Caco-2 (cell line): ENCODE measurements at regions of chr3 and their contacts with region 1.

Region 1: GRCh38 chr3:117355566-117355965 is 646.0 kb downstream of the TUSC7 start:
- DNase-seq: peak in 1 of 2 experiments; percentile 18
- H3K4me3 ChIP-seq: no peak overlapping the region
- H3K4me3 Mint-ChIP-seq: no peak overlapping the region
- H3K27ac Mint-ChIP-seq: no peak overlapping the region
- H3K4me1 ChIP-seq: no peaks in the 10 kb centered on the region
- H3K4me1 Mint-ChIP-seq: no peaks in the 10 kb centered on the region
- H3K27me3 ChIP-seq: no peaks in the 10 kb centered on the region
- H3K27me3 Mint-ChIP-seq: no peaks in the 10 kb centered on the region
- CTCF ChIP-seq: peak; percentile 32 to 35

Region 2: GRCh38 chr3:117059067-117059955 is 296.3 kb before region 1 on chr3:
- CTCF ChIA-PET with region 1: no interaction called
- POLR2A ChIA-PET with region 1: no interaction called
- intact Hi-C with region 1: loop called (anchors 1 kb)
- DNase-seq: peak in 1 of 2 experiments; percentile 3
- H3K4me3 ChIP-seq: no peak overlapping the region
- H3K4me3 Mint-ChIP-seq: no peak overlapping the region
- H3K27ac Mint-ChIP-seq: no peak overlapping the region
- H3K4me1 ChIP-seq: 0 out of 2 replicates have a peak, but pooled peaks cover 3% of the 10 kb centered on the region
- H3K4me1 Mint-ChIP-seq: no peaks in the 10 kb centered on the region
- H3K27me3 ChIP-seq: no peaks in the 10 kb centered on the region
- H3K27me3 Mint-ChIP-seq: peaks cover 3% of the 10 kb centered on the region
- CTCF ChIP-seq: peak; percentile 17 to 36

Region 3: GRCh38 chr3:117103675-117104074 is 251.9 kb before region 1 on chr3:
- CTCF ChIA-PET with region 1: no interaction called
- POLR2A ChIA-PET with region 1: no interaction called
- intact Hi-C with region 1: loop called (anchors 10 kb)
- DNase-seq: peak in 1 of 2 experiments; percentile 2
- H3K4me3 ChIP-seq: no peak overlapping the region
- H3K4me3 Mint-ChIP-seq: no peak overlapping the region
- H3K27ac Mint-ChIP-seq: no peak overlapping the region
- H3K4me1 ChIP-seq: no peaks in the 10 kb centered on the region
- H3K4me1 Mint-ChIP-seq: no peaks in the 10 kb centered on the region
- H3K27me3 ChIP-seq: no peaks in the 10 kb centered on the region
- H3K27me3 Mint-ChIP-seq: no peaks in the 10 kb centered on the region
- CTCF ChIP-seq: peak in 1 of 2 experiments; percentile 6

Region 4: DNA sequence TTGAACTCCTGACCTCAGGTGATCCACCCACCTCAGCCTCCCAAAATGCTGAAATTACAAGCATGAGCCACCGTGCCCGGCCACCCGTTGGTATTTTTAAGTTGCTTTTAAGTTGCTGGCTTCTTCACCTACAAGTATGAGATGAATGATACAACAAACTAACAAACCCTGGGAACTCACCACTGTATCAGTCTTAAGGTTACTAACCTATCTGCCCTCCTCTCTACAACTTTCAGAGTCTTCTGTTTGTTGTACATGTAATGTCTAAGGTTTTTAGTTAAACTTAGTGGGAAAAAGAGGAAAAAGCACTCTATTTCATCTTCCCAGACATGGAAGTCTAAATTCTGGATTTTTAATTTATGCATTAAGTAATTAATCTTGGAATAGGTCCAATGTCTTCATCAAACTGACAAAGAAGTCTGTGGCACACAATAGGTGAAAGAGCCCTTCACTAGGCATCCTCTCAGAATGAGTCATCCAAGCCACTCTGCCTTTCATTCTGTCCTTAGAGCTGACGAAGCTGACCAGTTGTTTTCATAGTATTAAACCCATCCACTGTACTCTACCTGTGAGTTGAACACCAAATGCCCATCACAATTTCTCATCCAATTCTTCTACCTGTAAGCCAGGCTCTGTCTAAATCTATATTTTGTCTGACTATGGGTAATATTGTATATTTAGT is 290.1 kb after region 1 on chr3:
- CTCF ChIA-PET with region 1: no interaction called
- POLR2A ChIA-PET with region 1: no interaction called
- intact Hi-C with region 1: no loop called
- DNase-seq: no peak
- H3K4me3 ChIP-seq: no peak overlapping the region
- H3K4me3 Mint-ChIP-seq: no peak overlapping the region
- H3K27ac Mint-ChIP-seq: no peak overlapping the region
- H3K4me1 ChIP-seq: no peaks in the 10 kb centered on the region
- H3K4me1 Mint-ChIP-seq: no peaks in the 10 kb centered on the region
- H3K27me3 ChIP-seq: no peaks in the 10 kb centered on the region
- H3K27me3 Mint-ChIP-seq: no peaks in the 10 kb centered on the region
- CTCF ChIP-seq: no peak